Body of pancreas (tissue), 4 donors: ENCODE measurements at regions of chr4 and their contacts with region 1.

Region 1: GRCh38 chr4:25299480-25300188 is 12.9 kb upstream of the ZCCHC4 start:
- DNase-seq: peak; percentile 48 to 74 (median 72)
- ATAC-seq: peak; percentile 90
- H3K4me3 ChIP-seq: no peak overlapping the region
- H3K27ac ChIP-seq: peak overlapping the region; percentile 23 to 59 (median 56)
- H3K4me1 ChIP-seq: peaks cover 14% of the 10 kb centered on the region
- H3K27me3 ChIP-seq: no peaks in the 10 kb centered on the region
- CTCF ChIP-seq: peak in 3 of 7 experiments; percentile 27 to 44 (median 40)
- POLR2A ChIP-seq: no peak

Region 2: DNA sequence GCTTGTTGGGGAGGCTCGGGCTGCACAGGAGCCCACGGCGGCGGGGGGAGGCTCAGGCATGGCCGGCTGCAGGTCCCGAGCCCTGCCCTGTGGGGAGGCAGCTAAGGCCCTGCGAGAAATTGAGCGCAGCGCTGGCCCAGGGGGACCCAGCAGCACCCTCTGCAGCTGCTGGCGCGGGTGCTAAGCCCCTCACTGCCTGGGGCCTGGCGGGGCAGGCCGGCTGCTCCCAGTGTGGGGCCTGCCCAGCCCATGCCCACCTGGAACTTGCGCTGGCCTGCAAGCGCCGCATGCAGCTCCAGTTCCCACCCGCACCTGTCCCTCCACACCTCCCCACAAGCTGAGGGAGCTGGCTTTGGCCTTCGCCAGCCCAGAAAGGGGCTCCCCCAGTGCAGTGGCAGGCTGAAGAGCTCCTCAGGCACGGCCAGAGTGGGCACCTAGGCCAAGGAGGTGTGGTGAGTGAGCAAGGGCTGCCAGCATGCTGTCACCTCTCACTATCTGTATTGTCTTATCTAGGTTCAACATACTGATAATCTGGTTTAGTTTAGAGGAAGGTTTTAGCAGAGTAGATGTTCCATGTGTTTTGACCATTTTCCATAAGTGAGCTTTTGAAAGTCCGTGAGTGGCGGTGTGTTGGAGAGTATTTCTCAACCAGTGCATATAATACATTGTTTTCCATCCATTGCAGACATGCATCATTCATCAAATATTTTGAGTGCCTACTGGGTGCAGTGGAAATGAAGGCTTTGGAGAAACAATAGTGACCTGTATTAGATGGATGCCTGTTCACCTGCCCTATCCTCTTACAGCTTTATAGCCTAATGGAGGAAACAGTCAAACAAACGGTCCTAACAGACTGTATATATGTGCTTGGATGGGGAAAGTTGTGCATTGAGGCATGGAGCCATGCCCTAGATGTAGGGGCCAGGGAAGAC is 52.7 kb before region 1 on chr4:
- intact Hi-C with region 1: loop called (anchors 10 kb)
- DNase-seq: no peak
- ATAC-seq: no peak
- H3K4me3 ChIP-seq: no peak overlapping the region
- H3K27ac ChIP-seq: no peak overlapping the region
- H3K4me1 ChIP-seq: peaks cover 9% of the 10 kb centered on the region
- H3K27me3 ChIP-seq: no peaks in the 10 kb centered on the region
- CTCF ChIP-seq: no peak
- POLR2A ChIP-seq: no peak